H1 (cell line): ENCODE measurements at regions of chr7 and their contacts with region 1.

Region 1: GRCh38 chr7:13540429-13540828 is 449.0 kb downstream of the ETV1 start:
- DNase-seq: no peak
- H3K4me3 ChIP-seq: no peak overlapping the region
- H3K27ac ChIP-seq: no peak overlapping the region
- H3K4me1 ChIP-seq: no peaks in the 10 kb centered on the region
- H3K27me3 ChIP-seq: no peaks in the 10 kb centered on the region
- CTCF ChIP-seq: no peak
- EP300 ChIP-seq: no peak
- POLR2A ChIP-seq: no peak
- RAD21 ChIP-seq: no peak

Region 2: GRCh38 chr7:13524076-13524475 is 16.4 kb before region 1 on chr7:
- CTCF ChIA-PET with region 1: interaction called, 13 read pairs
- POLR2A ChIA-PET with region 1: interaction called, 5 read pairs
- DNase-seq: no peak
- H3K4me3 ChIP-seq: no peak overlapping the region
- H3K27ac ChIP-seq: no peak overlapping the region
- H3K4me1 ChIP-seq: no peaks in the 10 kb centered on the region
- H3K27me3 ChIP-seq: no peaks in the 10 kb centered on the region
- CTCF ChIP-seq: no peak
- EP300 ChIP-seq: no peak
- POLR2A ChIP-seq: no peak
- RAD21 ChIP-seq: no peak